Common myeloid progenitor, CD34-positive (primary cell): ENCODE measurements at regions of chr5 and their contacts with region 1.

Region 1: GRCh38 chr5:149817539-149818060 is 87.5 kb downstream of the PPARGC1B start:
- DNase-seq: no peak
- H3K4me3 ChIP-seq: no peak overlapping the region
- H3K27ac ChIP-seq: no peak overlapping the region
- H3K4me1 ChIP-seq: no peaks in the 10 kb centered on the region
- H3K27me3 ChIP-seq: no peaks in the 10 kb centered on the region

Region 2: DNA sequence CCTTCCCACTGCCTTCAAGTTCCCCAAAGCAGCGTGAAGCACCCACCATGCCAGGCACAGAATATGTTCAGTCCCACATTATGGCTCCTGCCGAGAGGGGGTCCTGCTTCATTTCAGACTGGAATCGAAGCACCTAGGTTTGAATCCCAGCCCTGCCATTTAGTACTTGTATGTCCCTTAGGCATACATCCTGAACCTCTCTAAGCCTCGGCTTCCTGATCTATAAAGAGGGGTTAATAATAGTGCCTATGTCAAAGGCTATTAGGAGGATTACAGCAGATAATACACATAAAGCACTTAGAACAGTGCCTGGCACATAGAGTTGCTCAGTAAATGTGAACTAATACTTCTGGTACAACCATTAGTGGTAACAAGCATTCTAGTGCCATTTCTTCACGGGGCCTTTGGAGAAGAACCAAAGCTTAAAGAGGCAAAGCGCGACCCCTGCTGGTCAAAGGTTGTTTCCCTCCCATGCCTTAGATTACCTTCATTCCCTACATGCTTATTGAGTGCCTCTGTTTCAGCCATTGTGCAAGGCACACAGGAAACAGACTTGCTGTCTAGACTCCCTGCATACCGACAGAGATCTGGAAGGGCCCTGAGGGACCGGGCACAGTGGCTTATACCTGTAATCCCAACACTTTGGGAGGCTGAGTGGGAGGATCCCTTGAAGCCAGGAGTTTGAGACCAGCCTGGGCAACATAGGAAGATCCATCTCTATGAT is 10.7 kb after region 1 on chr5:
- CTCF ChIA-PET with region 1: interaction called, 27 read pairs
- POLR2A ChIA-PET with region 1: no interaction called
- DNase-seq: peak; percentile 85 to 92 (median 87)
- H3K4me3 ChIP-seq: no peak overlapping the region
- H3K27ac ChIP-seq: no peak overlapping the region
- H3K4me1 ChIP-seq: peaks cover 0 to 4% (median 0%) of the 10 kb centered on the region in 4 experiments
- H3K27me3 ChIP-seq: no peaks in the 10 kb centered on the region

Region 3: GRCh38 chr5:149860801-149861322 is 43.3 kb after region 1 on chr5:
- CTCF ChIA-PET with region 1: no interaction called
- POLR2A ChIA-PET with region 1: no interaction called
- DNase-seq: peak; percentile 8 to 55 (median 52)
- H3K4me3 ChIP-seq: no peak overlapping the region
- H3K27ac ChIP-seq: no peak overlapping the region
- H3K4me1 ChIP-seq: peaks cover 0 to 33% (median 17%) of the 10 kb centered on the region in 4 experiments
- H3K27me3 ChIP-seq: no peaks in the 10 kb centered on the region